H1 (cell line): ENCODE measurements at regions of chr14 and their contacts with region 1.

Region 1: DNA sequence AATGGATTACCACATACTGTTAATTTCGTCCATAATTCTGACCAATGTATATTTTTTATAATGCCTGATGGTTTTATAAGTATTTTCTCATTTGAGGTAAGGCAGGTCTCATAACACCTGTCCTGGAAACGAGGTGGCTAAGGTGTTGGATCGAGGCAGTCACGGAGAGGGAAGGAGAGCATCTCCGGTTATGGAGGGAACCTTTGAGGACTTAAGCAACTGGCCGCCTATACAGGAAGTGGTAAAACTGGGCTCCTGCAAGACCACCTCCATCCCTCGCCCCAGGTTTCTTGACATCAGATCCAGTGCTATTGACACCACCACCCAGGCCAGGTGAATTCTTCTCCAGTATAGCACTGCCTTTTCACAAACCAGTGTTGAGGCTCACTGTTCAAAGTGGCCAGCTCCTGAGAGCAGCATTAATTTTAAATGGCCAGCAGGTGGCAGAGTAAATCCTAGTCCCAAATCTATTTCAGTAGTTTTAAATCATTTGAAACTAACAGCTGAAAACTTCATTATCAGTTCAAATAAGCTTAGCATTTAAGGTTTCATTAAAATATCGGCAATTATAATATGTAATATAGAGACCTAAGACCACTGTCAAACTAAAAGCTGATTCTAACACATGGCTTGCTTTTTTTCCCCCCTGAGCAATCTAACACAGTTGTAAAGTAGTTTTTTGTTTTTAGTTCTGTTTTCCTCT is 100.8 kb downstream of the PPM1A start:
- DNase-seq: peak in 1 of 2 experiments; percentile 57
- H3K4me3 ChIP-seq: peak overlapping the region in 1 of 4 experiments; percentile 7; a peak in 1 of 8 replicates
- H3K27ac ChIP-seq: no peak overlapping the region
- H3K4me1 ChIP-seq: peaks cover 0 to 4% (median 3%) of the 10 kb centered on the region in 4 experiments; a peak in 6 of 7 replicates
- H3K27me3 ChIP-seq: no peaks in the 10 kb centered on the region; a peak in 1 of 7 replicates
- CTCF ChIP-seq: peak in 2 of 3 experiments; percentile 60 to 66; a peak in 3 of 4 replicates
- EP300 ChIP-seq: no peak
- POLR2A ChIP-seq: no peak
- RAD21 ChIP-seq: peak; percentile 62 to 64

Region 2: DNA sequence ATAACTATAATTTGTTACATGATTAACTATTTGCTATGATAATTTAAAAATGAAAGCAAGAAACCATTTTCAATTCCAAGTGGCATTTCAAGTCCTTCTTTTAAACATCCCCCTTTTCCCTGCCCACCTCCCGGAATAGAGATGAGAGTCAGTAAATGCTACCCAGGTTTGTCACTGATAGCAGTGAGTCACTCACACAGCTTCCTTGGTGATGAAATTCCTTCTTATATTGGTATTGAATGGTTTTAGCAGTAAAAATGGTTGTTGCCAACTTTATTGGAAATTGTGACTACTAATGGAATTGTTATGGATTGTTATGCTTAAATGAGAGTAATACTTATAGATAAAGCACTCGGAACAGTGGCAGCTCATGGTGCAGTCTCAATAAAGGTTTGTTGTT is 10.2 kb before region 1 on chr14:
- CTCF ChIA-PET with region 1: interaction called, 22 read pairs
- POLR2A ChIA-PET with region 1: interaction called, 4 read pairs
- DNase-seq: no peak
- H3K4me3 ChIP-seq: no peak overlapping the region
- H3K27ac ChIP-seq: no peak overlapping the region
- H3K4me1 ChIP-seq: no peaks in the 10 kb centered on the region
- H3K27me3 ChIP-seq: no peaks in the 10 kb centered on the region
- CTCF ChIP-seq: no peak
- EP300 ChIP-seq: no peak
- POLR2A ChIP-seq: no peak
- RAD21 ChIP-seq: no peak

Region 3: GRCh38 chr14:60363275-60363674 is 13.5 kb after region 1 on chr14:
- CTCF ChIA-PET with region 1: interaction called, 11 read pairs
- POLR2A ChIA-PET with region 1: no interaction called
- DNase-seq: no peak
- H3K4me3 ChIP-seq: no peak overlapping the region
- H3K27ac ChIP-seq: no peak overlapping the region
- H3K4me1 ChIP-seq: no peaks in the 10 kb centered on the region
- H3K27me3 ChIP-seq: no peaks in the 10 kb centered on the region
- CTCF ChIP-seq: no peak
- EP300 ChIP-seq: no peak
- POLR2A ChIP-seq: no peak
- RAD21 ChIP-seq: no peak

Region 4: GRCh38 chr14:60488175-60488574 is 138.4 kb after region 1 on chr14:
- CTCF ChIA-PET with region 1: interaction called, 11 read pairs
- POLR2A ChIA-PET with region 1: no interaction called
- DNase-seq: no peak
- H3K4me3 ChIP-seq: no peak overlapping the region
- H3K27ac ChIP-seq: no peak overlapping the region
- H3K4me1 ChIP-seq: no peaks in the 10 kb centered on the region
- H3K27me3 ChIP-seq: peaks cover 0 to 29% (median 16%) of the 10 kb centered on the region in 4 experiments; a peak in 6 of 7 replicates
- CTCF ChIP-seq: peak in 1 of 3 experiments; percentile 20; a peak in 1 of 4 replicates
- EP300 ChIP-seq: no peak
- POLR2A ChIP-seq: no peak
- RAD21 ChIP-seq: peak in 1 of 2 experiments; percentile 48; a peak in 3 of 4 replicates

Region 5: DNA sequence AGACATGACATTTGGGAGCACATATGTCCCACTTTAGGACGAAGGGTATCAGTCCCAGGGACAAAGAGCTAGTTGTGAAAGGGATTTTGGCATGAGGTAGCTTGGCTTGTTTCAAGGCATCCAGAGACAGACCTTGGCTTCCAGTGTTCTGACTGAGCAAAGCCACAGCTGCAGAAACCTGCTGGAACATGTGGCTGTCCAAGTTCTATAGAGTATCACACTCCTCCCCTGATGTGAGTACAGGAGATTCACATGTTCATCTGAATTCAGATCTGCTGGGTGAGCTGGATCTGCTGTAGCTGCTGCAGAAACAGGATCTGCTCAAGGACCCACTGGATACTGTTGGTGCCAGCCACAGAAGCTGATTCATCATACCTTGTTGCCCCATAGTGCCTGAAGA is 146.1 kb after region 1 on chr14:
- CTCF ChIA-PET with region 1: interaction called, 17 read pairs
- POLR2A ChIA-PET with region 1: no interaction called
- DNase-seq: no peak
- H3K4me3 ChIP-seq: no peak overlapping the region
- H3K27ac ChIP-seq: no peak overlapping the region
- H3K4me1 ChIP-seq: no peaks in the 10 kb centered on the region
- H3K27me3 ChIP-seq: peaks cover 0 to 1% (median 0%) of the 10 kb centered on the region in 4 experiments; a peak in 1 of 7 replicates
- CTCF ChIP-seq: no peak
- EP300 ChIP-seq: no peak
- POLR2A ChIP-seq: no peak
- RAD21 ChIP-seq: no peak

Region 6: DNA sequence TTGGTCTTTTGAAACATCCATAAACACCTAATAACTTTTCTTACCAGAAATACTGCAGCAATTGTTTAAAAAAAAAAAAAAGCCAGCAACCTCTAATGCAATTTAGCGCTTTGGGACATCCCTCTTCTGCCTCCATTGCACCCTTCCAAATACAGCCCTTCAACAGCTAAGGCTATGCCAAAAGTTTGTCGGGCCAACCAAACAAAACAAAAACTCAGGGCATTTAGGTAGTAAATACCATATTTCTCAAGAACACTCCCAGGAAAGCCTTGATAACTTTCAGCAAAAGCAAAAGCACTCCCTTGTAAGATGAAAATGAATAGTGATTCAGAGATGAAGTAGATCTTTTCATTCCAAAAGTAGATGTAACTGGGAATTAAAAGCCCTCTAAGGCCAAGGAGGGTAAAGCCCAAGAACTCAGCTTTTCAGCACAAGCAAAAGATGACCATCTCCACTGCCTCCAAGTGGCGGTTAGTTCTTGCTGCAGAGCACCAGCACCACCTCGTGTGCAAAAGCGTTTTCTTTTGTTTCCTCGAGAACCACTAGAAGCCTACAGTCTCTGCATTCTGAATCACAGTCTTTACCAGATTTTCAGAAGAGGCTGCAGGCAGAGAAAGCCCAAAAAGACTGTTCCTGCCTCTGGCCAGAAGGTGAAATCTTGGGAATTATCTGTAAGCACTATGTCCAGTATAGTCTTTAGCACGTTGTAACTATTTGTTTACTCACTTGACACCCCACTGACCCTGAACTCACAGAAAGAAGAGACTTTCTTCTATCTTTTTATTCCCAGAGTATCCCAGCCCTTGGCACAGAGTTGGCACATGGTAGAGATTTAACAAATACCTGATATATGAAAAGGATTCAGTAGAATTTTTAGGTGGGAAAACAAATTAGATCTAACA is 212.3 kb after region 1 on chr14:
- CTCF ChIA-PET with region 1: interaction called, 23 read pairs
- POLR2A ChIA-PET with region 1: no interaction called
- DNase-seq: peak; percentile 53 to 60
- H3K4me3 ChIP-seq: no peak overlapping the region
- H3K27ac ChIP-seq: no peak overlapping the region
- H3K4me1 ChIP-seq: no peaks in the 10 kb centered on the region
- H3K27me3 ChIP-seq: no peaks in the 10 kb centered on the region
- CTCF ChIP-seq: peak; percentile 74 to 98 (median 96)
- EP300 ChIP-seq: no peak
- POLR2A ChIP-seq: no peak
- RAD21 ChIP-seq: peak; percentile 98 to 99